ENCODE measurements at regions of chr17 and their contacts with region 1.

Region 1: GRCh38 chr17:81512560-81513371 is at the start of gene ACTG1:
- DNase-seq: peak; percentile 80
- ATAC-seq: peak; percentile 46
- H3K4me3 ChIP-seq: peak within 1 kb of the TSS; percentile 90 to 96
- H3K27ac ChIP-seq: peak within 1 kb of the TSS; percentile 100
- H3K4me1 ChIP-seq: peaks cover 23 to 77% of the 10 kb centered on the region in 2 experiments
- H3K27me3 ChIP-seq: no peaks in the 10 kb centered on the region
- CTCF ChIP-seq: no peak
- POLR2A ChIP-seq: peak; percentile 99
- RAD21 ChIP-seq: no peak
- total RNA-seq, gene ACTG1: 6,223 TPM

Region 2: GRCh38 chr17:81460856-81461460 is 51.8 kb before region 1 on chr17:
- CTCF ChIA-PET with region 1: no interaction called
- POLR2A ChIA-PET with region 1: no interaction called
- RAD21 ChIA-PET with region 1: no interaction called
- intact Hi-C with region 1: no loop called
- DNase-seq: no peak
- ATAC-seq: no peak
- H3K4me3 ChIP-seq: no peak overlapping the region
- H3K27ac ChIP-seq: no peak overlapping the region
- H3K4me1 ChIP-seq: no peaks in the 10 kb centered on the region
- H3K27me3 ChIP-seq: no peaks in the 10 kb centered on the region
- CTCF ChIP-seq: no peak
- POLR2A ChIP-seq: no peak
- RAD21 ChIP-seq: no peak

Region 3: GRCh38 chr17:81500047-81500446 is 12.7 kb before region 1 on chr17:
- CTCF ChIA-PET with region 1: no interaction called
- POLR2A ChIA-PET with region 1: interaction called, 26 read pairs
- RAD21 ChIA-PET with region 1: no interaction called
- intact Hi-C with region 1: no loop called
- DNase-seq: no peak
- ATAC-seq: no peak
- H3K4me3 ChIP-seq: no peak overlapping the region
- H3K27ac ChIP-seq: no peak overlapping the region
- H3K4me1 ChIP-seq: peaks cover 2 to 13% of the 10 kb centered on the region in 2 experiments; a peak in 3 of 4 replicates
- H3K27me3 ChIP-seq: no peaks in the 10 kb centered on the region
- CTCF ChIP-seq: no peak
- POLR2A ChIP-seq: no peak
- RAD21 ChIP-seq: no peak

Measured in HCT116 (cell line).